MCF 10A (cell line): ENCODE measurements at regions of chr9 and their contacts with region 1.

Region 1: GRCh38 chr9:84953797-84954705 is 284.5 kb downstream of the NTRK2 start:
- DNase-seq: peak; percentile 75
- H3K4me3 Mint-ChIP-seq: no peak overlapping the region
- H3K27ac Mint-ChIP-seq: no peak overlapping the region
- H3K4me1 Mint-ChIP-seq: peaks cover 7% of the 10 kb centered on the region
- H3K27me3 Mint-ChIP-seq: no peaks in the 10 kb centered on the region
- CTCF ChIP-seq: peak; percentile 90

Region 2: DNA sequence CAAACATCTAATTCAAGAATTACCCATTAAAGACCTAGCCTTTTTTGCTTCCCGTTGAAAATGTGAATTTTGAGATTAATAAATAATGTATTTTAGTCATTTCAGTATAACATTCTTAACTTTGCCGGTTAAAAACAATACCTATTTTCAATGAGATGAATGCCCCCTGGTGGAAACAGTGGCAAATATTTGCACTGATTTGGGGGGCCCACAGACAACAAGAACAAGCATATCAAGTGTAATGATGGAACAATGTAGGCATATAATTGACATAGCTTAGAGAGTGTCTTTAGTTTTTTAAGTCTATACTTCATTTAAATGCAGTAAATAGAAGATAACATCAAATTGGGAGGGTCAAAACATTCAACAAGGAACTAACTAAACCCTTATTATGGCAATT is 172.6 kb before region 1 on chr9:
- CTCF ChIA-PET with region 1: interaction called, 3 read pairs
- POLR2A ChIA-PET with region 1: no interaction called
- intact Hi-C with region 1: loop called (anchors 5 kb)
- DNase-seq: peak; percentile 40
- H3K4me3 Mint-ChIP-seq: no peak overlapping the region
- H3K27ac Mint-ChIP-seq: no peak overlapping the region
- H3K4me1 Mint-ChIP-seq: no peaks in the 10 kb centered on the region
- H3K27me3 Mint-ChIP-seq: peaks cover 13% of the 10 kb centered on the region
- CTCF ChIP-seq: peak; percentile 50

Region 3: GRCh38 chr9:85142968-85143367 is 188.9 kb after region 1 on chr9:
- CTCF ChIA-PET with region 1: interaction called, 3 read pairs
- POLR2A ChIA-PET with region 1: interaction called, 3 read pairs
- intact Hi-C with region 1: loop called (anchors 5 kb)
- DNase-seq: peak; percentile 37
- H3K4me3 Mint-ChIP-seq: no peak overlapping the region
- H3K27ac Mint-ChIP-seq: no peak overlapping the region
- H3K4me1 Mint-ChIP-seq: peaks cover 15% of the 10 kb centered on the region
- H3K27me3 Mint-ChIP-seq: no peaks in the 10 kb centered on the region
- CTCF ChIP-seq: peak; percentile 50